HepG2 (cell line): ENCODE measurements at regions of chr3 and their contacts with region 1.

Region 1: DNA sequence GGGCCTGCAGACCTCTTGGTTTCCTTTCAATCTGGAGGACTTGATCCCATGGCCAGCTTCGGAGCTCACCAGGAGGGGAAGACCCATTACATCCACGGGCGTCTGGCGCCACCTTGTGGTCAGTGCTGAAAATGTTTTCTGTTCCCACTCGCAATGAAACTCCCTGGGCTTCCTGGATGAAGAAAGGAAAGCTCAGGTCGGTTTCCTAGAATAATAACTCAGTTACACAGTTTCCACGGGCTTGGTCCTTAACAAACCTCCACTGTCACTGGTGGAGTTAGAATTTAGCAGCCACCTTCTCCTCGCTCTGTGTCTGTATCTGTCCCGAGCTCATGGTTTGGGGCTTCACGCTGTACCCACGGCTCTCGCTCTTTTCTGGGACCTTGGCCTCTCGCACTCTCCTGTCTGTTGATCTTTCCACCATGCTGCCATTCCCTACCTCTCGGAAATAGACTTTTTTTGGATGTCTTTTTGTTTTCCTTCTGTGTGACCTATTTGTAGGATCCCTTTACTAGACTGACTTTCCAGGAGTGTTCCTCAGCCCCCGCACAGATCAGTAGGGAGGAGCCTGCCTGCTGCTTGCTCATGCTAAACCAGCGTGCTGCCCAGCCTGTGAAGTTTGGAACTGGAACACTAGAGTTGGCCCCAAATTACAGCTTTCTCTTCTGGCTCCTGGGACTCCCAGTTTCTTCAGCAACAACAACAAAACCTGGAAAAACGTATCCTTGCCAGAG is 56.3 kb downstream of the IL20RB start:
- DNase-seq: peak; percentile 82
- ATAC-seq: peak; percentile 94
- H3K4me3 ChIP-seq: peak overlapping the region; percentile 54 to 86 (median 73)
- H3K27ac ChIP-seq: peak overlapping the region; percentile 63
- H3K4me1 ChIP-seq: peaks cover 16% of the 10 kb centered on the region
- H3K27me3 ChIP-seq: no peaks in the 10 kb centered on the region; a peak in 1 of 5 replicates
- CTCF ChIP-seq: peak; percentile 94
- EP300 ChIP-seq: no peak
- POLR2A ChIP-seq: no peak; a peak in 1 of 4 replicates
- RAD21 ChIP-seq: peak; percentile 94

Region 2: GRCh38 chr3:136385457-136385856 is 628.7 kb before region 1 on chr3:
- CTCF ChIA-PET with region 1: no interaction called
- POLR2A ChIA-PET with region 1: no interaction called
- in situ Hi-C with region 1: loop called (anchors 25 kb)
- intact Hi-C with region 1: no loop called
- DNase-seq: no peak
- ATAC-seq: no peak
- H3K4me3 ChIP-seq: no peak overlapping the region
- H3K27ac ChIP-seq: no peak overlapping the region
- H3K4me1 ChIP-seq: no peaks in the 10 kb centered on the region
- H3K27me3 ChIP-seq: no peaks in the 10 kb centered on the region
- CTCF ChIP-seq: no peak
- EP300 ChIP-seq: no peak
- POLR2A ChIP-seq: no peak
- RAD21 ChIP-seq: no peak

Region 3: DNA sequence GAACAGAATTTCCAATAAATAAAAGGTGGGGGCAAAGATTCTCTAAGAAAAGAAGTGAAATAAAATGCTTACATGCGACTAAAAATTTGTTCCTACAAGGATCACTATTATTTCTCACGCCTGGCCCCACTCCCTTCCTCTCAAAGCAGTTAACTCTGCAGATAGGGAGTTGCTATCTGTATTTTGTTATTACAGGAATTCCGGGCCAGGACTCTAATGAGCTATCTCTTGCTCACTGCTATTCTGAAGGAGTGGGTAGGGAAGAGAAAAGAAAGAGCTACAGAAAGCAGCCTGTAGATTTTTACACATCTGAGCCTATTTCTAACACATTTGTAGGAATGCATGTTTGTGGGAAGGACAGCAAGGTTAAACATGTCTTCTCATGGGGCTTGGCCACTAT is 623.5 kb before region 1 on chr3:
- CTCF ChIA-PET with region 1: interaction called, 8 read pairs
- POLR2A ChIA-PET with region 1: no interaction called
- in situ Hi-C with region 1: loop called (anchors 25 kb)
- intact Hi-C with region 1: loop called (anchors 1 kb)
- DNase-seq: no peak
- ATAC-seq: no peak
- H3K4me3 ChIP-seq: no peak overlapping the region
- H3K27ac ChIP-seq: no peak overlapping the region
- H3K4me1 ChIP-seq: no peaks in the 10 kb centered on the region
- H3K27me3 ChIP-seq: no peaks in the 10 kb centered on the region
- CTCF ChIP-seq: no peak
- EP300 ChIP-seq: no peak
- POLR2A ChIP-seq: no peak
- RAD21 ChIP-seq: no peak

Region 4: DNA sequence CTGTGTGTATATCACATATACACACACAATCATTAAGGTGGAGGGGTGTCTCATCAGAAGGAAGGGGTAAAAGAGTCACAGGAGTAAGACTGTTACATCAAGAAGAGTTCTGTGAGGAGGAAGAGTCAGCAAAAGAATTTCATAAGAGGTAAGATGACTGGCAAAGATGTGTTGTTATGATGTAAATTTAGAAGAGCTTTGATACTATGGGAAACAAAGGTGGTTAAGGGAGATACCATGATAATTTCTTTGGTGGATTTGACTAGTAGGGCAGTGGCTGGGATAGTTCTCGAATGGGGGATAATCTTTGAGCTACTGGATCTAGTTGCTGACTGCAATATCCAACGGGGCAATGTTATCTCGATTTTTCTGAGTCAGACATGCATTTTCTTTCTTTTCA is 323.5 kb before region 1 on chr3:
- CTCF ChIA-PET with region 1: no interaction called
- POLR2A ChIA-PET with region 1: no interaction called
- in situ Hi-C with region 1: no loop called
- intact Hi-C with region 1: no loop called
- DNase-seq: no peak
- ATAC-seq: no peak
- H3K4me3 ChIP-seq: no peak overlapping the region
- H3K27ac ChIP-seq: no peak overlapping the region
- H3K4me1 ChIP-seq: peaks cover 43% of the 10 kb centered on the region
- H3K27me3 ChIP-seq: no peaks in the 10 kb centered on the region
- CTCF ChIP-seq: no peak
- EP300 ChIP-seq: no peak
- POLR2A ChIP-seq: no peak
- RAD21 ChIP-seq: no peak

Region 5: GRCh38 chr3:136949708-136950107 is 64.4 kb before region 1 on chr3:
- CTCF ChIA-PET with region 1: interaction called, 4 read pairs
- POLR2A ChIA-PET with region 1: no interaction called
- in situ Hi-C with region 1: no loop called
- intact Hi-C with region 1: loop called (anchors 1 kb)
- DNase-seq: no peak
- ATAC-seq: no peak
- H3K4me3 ChIP-seq: no peak overlapping the region
- H3K27ac ChIP-seq: no peak overlapping the region
- H3K4me1 ChIP-seq: peaks cover 25% of the 10 kb centered on the region
- H3K27me3 ChIP-seq: no peaks in the 10 kb centered on the region; a peak in 1 of 5 replicates
- CTCF ChIP-seq: no peak
- EP300 ChIP-seq: no peak
- POLR2A ChIP-seq: no peak
- RAD21 ChIP-seq: no peak

Region 6: DNA sequence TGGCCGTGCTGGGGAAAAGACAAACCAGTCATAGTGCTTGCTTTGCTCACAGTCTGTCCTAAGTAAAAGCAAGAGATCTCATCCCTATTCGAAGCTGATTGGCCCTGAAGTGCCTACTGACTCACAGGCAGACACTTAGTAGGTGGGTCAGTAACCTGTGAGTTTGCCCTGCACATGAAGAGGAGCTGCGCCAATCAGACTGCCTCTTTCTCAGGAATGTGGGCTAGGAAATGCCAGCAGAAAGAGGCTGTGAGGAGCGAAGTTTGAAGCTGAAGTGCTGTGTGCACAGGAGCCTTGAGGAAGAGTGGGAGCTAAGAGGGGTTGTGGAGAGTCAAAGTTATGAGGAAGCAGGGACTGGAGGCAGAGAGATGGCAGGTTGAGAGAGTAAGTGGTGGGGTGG is 70.5 kb after region 1 on chr3:
- CTCF ChIA-PET with region 1: no interaction called
- POLR2A ChIA-PET with region 1: no interaction called
- in situ Hi-C with region 1: no loop called
- intact Hi-C with region 1: no loop called
- DNase-seq: no peak
- ATAC-seq: no peak
- H3K4me3 ChIP-seq: no peak overlapping the region
- H3K27ac ChIP-seq: no peak overlapping the region
- H3K4me1 ChIP-seq: no peaks in the 10 kb centered on the region
- H3K27me3 ChIP-seq: no peaks in the 10 kb centered on the region
- CTCF ChIP-seq: no peak
- EP300 ChIP-seq: no peak
- POLR2A ChIP-seq: no peak
- RAD21 ChIP-seq: no peak

Region 7: GRCh38 chr3:137116619-137117018 is 102.5 kb after region 1 on chr3:
- CTCF ChIA-PET with region 1: no interaction called
- POLR2A ChIA-PET with region 1: no interaction called
- in situ Hi-C with region 1: no loop called
- intact Hi-C with region 1: no loop called
- DNase-seq: no peak
- ATAC-seq: no peak
- H3K4me3 ChIP-seq: no peak overlapping the region
- H3K27ac ChIP-seq: no peak overlapping the region
- H3K4me1 ChIP-seq: no peaks in the 10 kb centered on the region
- H3K27me3 ChIP-seq: no peaks in the 10 kb centered on the region
- CTCF ChIP-seq: no peak
- EP300 ChIP-seq: no peak
- POLR2A ChIP-seq: no peak
- RAD21 ChIP-seq: no peak